Activated naive CD4-positive, alpha-beta T cell treated with anti-CD3 and anti-CD28 coated beads for 36 hours (primary cell): ENCODE measurements at regions of chr12 and their contacts with region 1.

Region 1: GRCh38 chr12:69239352-69239921 is at the start of gene CPSF6:
- DNase-seq: peak; percentile 97
- H3K4me3 Mint-ChIP-seq: peak within 1 kb of the TSS; percentile 91
- H3K27ac Mint-ChIP-seq: peak within 1 kb of the TSS; percentile 98
- H3K4me1 Mint-ChIP-seq: peaks cover 47% of the 10 kb centered on the region
- H3K27me3 Mint-ChIP-seq: no peaks in the 10 kb centered on the region
- total RNA-seq, gene CPSF6: 73.7 to 75.7 TPM

Region 2: DNA sequence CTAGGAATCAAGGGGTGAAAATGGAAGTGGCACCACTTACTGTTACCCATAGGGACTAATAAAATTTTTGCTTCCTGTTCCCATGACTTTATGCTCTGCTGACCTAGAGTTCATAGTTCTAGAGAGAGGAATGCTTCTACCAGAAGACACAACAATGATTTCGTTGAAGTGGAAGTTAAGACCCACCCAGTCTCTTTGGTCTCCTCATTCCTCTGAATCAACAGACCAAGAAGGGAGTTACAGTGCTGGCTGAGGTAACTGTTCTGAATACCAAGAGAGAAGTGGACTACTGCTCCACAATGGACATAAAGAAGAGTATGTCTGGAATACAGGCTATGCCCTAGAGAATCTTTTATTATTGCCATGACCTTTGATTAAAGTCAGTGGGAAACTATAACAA is 1614.4 kb before region 1 on chr12:
- CTCF ChIA-PET with region 1: no interaction called
- intact Hi-C with region 1: no loop called
- DNase-seq: no peak
- H3K4me3 Mint-ChIP-seq: no peak overlapping the region
- H3K27ac Mint-ChIP-seq: no peak overlapping the region
- H3K4me1 Mint-ChIP-seq: peaks cover 37% of the 10 kb centered on the region
- H3K27me3 Mint-ChIP-seq: no peaks in the 10 kb centered on the region

Region 3: DNA sequence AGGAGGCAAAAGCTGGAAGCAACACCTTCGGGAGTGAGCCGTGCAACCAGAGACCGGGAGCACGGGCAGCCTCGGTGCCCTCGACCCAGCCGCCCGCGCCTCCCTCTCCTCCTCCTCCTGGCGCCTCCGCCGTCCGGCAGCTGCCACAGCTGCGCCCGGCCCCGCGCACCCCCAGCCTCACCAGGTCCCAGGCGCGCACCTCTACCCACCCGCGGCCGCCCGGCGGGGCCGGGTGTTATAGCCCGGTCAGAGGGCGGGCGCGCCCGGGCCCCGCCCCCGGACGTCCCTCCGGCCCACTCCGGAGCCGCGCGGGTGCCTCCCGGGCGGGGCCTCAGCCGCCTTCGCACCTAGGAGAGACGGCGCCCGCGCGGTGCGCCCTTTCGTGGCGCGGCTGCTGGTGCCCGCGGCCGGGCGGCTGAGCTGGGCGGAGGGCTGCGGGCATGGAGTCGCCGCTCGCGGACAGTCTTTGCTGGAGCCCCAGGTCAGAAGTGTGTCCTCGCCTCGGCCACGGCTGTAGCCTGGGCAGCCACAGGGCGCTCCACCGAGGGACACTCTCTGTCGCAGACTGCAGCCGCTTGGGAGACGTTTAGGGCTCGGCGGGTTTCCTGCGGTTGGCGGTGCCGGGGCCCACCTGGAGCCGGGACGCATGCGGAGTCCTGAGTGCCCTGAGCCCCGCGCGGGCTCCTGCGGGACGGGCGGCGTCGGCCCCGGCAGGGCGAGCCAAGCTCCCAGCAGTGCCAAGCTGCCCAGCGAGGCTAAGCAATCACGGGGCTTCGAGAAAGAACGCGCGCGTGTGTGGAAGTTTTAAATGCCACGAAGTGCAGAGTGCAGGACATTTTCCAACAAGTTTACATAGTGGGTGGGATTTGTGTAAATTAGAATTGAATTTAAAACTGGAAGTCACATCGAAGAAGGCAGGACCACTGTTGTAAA is 306.2 kb before region 1 on chr12 and contains the start of gene CPM:
- CTCF ChIA-PET with region 1: no interaction called
- intact Hi-C with region 1: loop called (anchors 2 kb)
- DNase-seq: peak; percentile 76
- H3K4me3 Mint-ChIP-seq: peak within 1 kb of the TSS; percentile 82
- H3K27ac Mint-ChIP-seq: peak within 1 kb of the TSS; percentile 58
- H3K4me1 Mint-ChIP-seq: peaks cover 21% of the 10 kb centered on the region
- H3K27me3 Mint-ChIP-seq: peaks cover 22% of the 10 kb centered on the region
- total RNA-seq, gene CPM: 50.5 to 55.1 TPM

Region 4: DNA sequence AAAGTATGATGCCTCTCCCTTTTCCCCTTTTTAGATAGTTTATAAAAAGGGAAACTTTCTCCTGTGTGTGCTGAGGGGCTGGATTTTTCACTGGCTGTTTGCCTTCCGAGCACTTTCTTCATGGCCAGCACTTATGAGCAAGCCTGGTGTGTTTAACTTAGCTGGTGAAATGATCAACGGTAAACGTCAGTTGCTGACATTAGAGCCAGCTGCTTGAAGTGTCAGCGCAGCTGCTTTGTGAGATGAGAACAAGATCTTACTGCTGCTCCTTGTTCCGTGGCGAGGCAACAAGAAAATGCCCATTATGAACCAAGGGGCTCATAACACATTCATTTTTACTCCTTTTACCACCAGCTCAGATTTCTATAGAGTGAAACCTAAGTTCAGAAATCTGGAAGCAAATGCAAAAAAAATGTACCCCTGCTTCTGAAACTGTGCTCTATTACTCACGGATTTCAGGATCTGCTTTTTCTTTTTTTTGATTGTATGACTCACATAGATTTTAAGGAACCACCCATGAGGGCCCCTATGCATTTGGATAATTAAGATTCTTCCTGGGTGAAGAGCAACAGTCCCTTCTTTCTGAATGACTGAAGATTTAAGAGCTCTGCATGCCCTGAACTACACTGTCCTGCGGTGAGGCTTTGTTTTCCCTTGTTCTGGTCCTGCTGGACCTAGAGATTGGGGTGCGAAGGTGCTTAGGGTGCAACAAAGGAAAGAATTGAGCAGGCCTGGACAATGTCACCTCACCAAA is 232.2 kb before region 1 on chr12:
- CTCF ChIA-PET with region 1: no interaction called
- intact Hi-C with region 1: loop called (anchors 2 kb)
- DNase-seq: peak; percentile 51
- H3K4me3 Mint-ChIP-seq: peak overlapping the region; percentile 56
- H3K27ac Mint-ChIP-seq: peak overlapping the region; percentile 83
- H3K4me1 Mint-ChIP-seq: peaks cover 17% of the 10 kb centered on the region
- H3K27me3 Mint-ChIP-seq: peaks cover 28% of the 10 kb centered on the region

Region 5: DNA sequence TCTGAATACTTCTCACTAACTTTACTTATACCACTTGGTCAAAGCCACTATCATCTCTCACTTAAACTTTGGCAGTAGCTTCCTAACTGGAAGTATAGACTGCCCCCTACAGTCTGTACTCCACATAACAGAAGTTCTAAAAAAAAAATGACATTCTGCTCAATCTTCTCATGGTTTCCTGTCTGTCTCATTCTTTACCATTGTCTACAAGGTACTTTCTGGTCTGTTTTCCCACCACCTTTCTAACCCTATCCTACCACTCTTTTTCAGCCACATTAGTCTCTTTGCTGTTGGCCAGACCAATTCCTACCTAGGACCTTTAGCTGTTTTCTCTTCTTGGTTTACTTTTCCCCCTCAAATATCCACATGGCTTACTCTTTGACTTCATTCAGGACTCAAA is 14.6 kb after region 1 on chr12:
- CTCF ChIA-PET with region 1: interaction called, 6 read pairs
- intact Hi-C with region 1: loop called (anchors 1 kb)
- DNase-seq: no peak
- H3K4me3 Mint-ChIP-seq: no peak overlapping the region
- H3K27ac Mint-ChIP-seq: peak overlapping the region; percentile 71
- H3K4me1 Mint-ChIP-seq: peaks cover 39% of the 10 kb centered on the region
- H3K27me3 Mint-ChIP-seq: no peaks in the 10 kb centered on the region

Region 6: DNA sequence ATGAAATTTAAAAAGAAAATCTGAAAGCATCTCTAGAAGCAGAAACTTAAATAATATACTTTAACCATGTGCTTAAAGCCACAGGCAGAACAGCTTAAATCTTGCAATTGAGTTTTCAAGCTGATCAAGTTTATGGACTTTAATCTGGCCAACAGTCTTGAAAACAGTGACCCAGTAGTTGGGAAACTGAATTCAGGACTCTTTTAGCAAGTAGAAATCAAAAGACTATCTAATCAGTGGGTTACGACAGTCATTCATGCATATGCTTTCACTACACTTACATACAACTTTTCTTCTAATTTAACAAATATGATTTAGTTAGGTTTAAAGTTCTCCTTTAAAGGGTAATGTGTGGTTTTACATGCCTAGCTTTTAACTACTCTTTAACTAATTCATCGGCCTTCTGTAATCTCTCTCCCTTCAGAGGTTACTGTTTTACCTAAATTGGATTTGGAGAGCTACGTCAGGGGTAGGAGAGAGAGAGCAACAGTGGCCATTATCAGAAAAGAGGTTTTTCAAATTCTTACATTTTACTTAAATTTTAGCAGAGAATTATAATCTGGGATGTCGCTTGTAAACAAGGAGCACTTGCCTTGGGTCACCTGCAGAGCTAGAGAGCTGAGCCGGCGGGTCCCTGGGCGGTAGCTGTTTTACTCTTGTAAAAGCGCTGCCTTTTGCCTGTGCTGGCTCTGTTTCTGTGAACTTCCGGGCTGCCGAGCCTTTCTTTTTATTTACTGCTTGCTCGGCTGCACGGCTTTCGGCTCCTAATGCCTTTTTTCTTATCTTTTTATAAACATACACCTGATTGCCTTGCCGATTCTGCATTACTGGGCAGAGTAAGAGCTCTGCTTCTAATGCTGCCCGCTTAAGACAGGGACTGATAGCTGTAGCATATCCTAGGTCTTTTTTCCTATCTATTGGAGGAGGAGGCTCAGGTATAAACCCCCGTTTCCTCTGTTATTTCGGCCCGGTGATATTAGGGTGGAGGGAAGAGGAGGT is 91.3 kb after region 1 on chr12:
- CTCF ChIA-PET with region 1: no interaction called
- intact Hi-C with region 1: loop called (anchors 1 kb)
- DNase-seq: peak; percentile 74
- H3K4me3 Mint-ChIP-seq: peak overlapping the region; percentile 80
- H3K27ac Mint-ChIP-seq: peak overlapping the region; percentile 90
- H3K4me1 Mint-ChIP-seq: peaks cover 60% of the 10 kb centered on the region
- H3K27me3 Mint-ChIP-seq: no peaks in the 10 kb centered on the region

Region 7: DNA sequence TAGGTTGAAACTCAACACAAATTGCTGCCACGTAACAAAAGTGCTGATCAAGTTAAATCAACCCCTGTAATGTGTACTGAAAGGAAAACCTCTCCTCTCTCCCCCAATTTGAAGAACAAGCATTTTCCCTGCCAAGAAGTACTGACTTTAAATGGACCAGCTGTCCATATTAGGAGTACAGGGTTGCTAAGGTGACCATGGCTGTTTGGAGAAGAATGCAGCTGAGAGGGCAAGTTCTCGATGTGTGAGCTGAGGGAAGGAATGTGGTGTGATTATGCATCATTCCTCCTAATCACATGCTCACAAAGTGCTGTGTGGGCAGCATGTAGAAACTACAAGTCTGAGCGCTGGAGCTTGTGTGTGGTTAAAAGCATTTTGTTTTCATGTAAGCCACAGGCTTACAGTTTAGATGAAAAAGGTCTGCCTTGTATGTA is 295.0 kb after region 1 on chr12:
- CTCF ChIA-PET with region 1: no interaction called
- intact Hi-C with region 1: no loop called
- DNase-seq: peak; percentile 51
- H3K4me3 Mint-ChIP-seq: no peak overlapping the region
- H3K27ac Mint-ChIP-seq: no peak overlapping the region
- H3K4me1 Mint-ChIP-seq: peaks cover 17% of the 10 kb centered on the region
- H3K27me3 Mint-ChIP-seq: no peaks in the 10 kb centered on the region

Region 8: GRCh38 chr12:69585189-69586062 is 346.0 kb after region 1 on chr12 and contains the start of gene CCT2:
- CTCF ChIA-PET with region 1: interaction called, 5 read pairs
- intact Hi-C with region 1: loop called (anchors 1 kb)
- DNase-seq: peak; percentile 97
- H3K4me3 Mint-ChIP-seq: peak within 1 kb of the TSS; percentile 86
- H3K27ac Mint-ChIP-seq: peak within 1 kb of the TSS; percentile 92
- H3K4me1 Mint-ChIP-seq: peaks cover 27% of the 10 kb centered on the region
- H3K27me3 Mint-ChIP-seq: no peaks in the 10 kb centered on the region
- total RNA-seq, gene CCT2: 268 to 280 TPM

Region 9: GRCh38 chr12:70365648-70366518 is 1126.4 kb after region 1 on chr12 and contains the start of gene KCNMB4:
- CTCF ChIA-PET with region 1: no interaction called
- intact Hi-C with region 1: loop called (anchors 10 kb)
- DNase-seq: peak; percentile 75
- H3K4me3 Mint-ChIP-seq: peak within 1 kb of the TSS; percentile 90
- H3K27ac Mint-ChIP-seq: no peak within 1 kb of the TSS
- H3K4me1 Mint-ChIP-seq: peaks cover 18% of the 10 kb centered on the region
- H3K27me3 Mint-ChIP-seq: peaks cover 10% of the 10 kb centered on the region
- total RNA-seq, gene KCNMB4: 0.54 to 0.60 TPM